Right cardiac atrium (tissue), 5 donors: ENCODE measurements at regions of chr19 and their contacts with region 1.

Region 1: DNA sequence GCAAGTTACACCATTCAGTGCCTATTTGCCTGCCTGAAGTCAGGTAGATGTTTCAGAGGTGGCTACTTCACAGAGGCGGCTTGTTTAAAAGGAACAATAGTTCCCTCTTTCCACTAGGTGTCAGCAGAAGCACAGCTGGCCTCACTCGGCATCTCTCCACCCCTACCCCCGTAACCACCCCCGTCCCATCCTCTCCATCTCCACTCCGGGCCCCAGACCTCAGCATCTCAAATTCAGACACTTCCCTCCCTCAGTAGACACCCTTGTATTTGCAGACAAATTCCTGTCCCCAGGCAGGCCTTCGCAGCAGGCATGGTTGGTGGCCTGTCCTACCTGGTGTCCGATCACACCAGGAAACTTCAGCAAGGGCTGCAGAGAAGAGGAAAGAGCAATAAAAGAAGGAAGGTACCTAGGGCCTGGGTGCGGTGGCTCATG is 9.1 kb upstream of the DPP9 start:
- DNase-seq: peak in 2 of 3 donors; percentile 62 to 69
- ATAC-seq: peak; percentile 83 to 89
- H3K4me3 ChIP-seq: no peak overlapping the region
- H3K27ac ChIP-seq: no peak overlapping the region
- H3K4me1 ChIP-seq: no peaks in the 10 kb centered on the region
- H3K27me3 ChIP-seq: no peaks in the 10 kb centered on the region

Region 2: DNA sequence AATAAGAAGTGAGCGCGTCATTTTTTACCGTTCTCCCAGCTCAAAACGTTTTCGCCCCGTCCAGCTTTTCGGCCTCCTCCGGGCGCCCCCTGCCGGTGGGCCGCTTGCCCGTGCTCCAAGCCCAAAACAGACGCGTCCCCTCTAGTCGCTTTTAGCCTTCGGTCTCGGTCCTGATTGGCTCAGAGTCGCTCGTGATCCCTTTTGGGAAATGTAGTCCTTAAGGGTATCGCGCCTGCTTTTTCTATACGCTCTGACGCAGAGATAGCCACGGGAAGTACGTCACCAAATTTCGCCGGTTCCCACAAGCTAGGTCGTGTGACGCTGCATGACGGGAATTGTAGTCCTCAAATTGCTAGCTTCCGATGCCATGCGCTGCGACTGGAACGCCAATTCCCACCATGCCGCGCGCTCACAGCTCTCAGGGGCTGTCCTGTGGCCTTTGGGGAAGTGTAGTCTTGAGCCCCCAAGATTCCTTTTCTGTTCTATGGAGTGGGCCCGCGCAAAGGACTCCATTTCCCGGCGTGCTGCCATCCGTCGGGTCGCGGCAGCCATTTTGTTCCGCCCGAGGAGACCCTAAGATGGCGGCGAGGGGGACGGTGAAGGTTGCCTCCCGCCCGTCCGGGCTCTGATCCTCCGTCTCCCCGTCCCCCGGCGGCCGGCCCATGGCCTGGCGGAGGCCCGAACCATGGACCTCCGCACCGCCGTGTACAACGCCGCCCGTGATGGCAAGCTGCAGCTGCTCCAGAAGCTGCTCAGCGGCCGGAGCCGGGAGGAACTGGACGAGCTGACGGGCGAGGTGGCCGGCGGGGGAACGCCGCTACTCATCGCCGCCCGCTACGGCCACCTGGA is 58.7 kb after region 1 on chr19 and contains the start of gene FEM1A:
- intact Hi-C with region 1: loop called in 2 of 4 experiments (anchors 5 kb)
- DNase-seq: peak; percentile 99 to 100 (median 100)
- ATAC-seq: peak; percentile 100
- H3K4me3 ChIP-seq: peak within 1 kb of the TSS; percentile 66
- H3K27ac ChIP-seq: peak within 1 kb of the TSS; percentile 65
- H3K4me1 ChIP-seq: no peaks in the 10 kb centered on the region
- H3K27me3 ChIP-seq: no peaks in the 10 kb centered on the region
- total RNA-seq, gene FEM1A: 23.4 to 28.3 (median 27.9) TPM

Region 3: GRCh38 chr19:4803736-4804695 is 71.3 kb after region 1 on chr19:
- intact Hi-C with region 1: loop called (anchors 5 kb)
- DNase-seq: peak; percentile 61 to 87 (median 82)
- ATAC-seq: peak; percentile 72
- H3K4me3 ChIP-seq: no peak overlapping the region
- H3K27ac ChIP-seq: no peak overlapping the region
- H3K4me1 ChIP-seq: no peaks in the 10 kb centered on the region
- H3K27me3 ChIP-seq: no peaks in the 10 kb centered on the region